Panc1 (cell line): ENCODE measurements at regions of chr9 and their contacts with region 1.

Region 1: DNA sequence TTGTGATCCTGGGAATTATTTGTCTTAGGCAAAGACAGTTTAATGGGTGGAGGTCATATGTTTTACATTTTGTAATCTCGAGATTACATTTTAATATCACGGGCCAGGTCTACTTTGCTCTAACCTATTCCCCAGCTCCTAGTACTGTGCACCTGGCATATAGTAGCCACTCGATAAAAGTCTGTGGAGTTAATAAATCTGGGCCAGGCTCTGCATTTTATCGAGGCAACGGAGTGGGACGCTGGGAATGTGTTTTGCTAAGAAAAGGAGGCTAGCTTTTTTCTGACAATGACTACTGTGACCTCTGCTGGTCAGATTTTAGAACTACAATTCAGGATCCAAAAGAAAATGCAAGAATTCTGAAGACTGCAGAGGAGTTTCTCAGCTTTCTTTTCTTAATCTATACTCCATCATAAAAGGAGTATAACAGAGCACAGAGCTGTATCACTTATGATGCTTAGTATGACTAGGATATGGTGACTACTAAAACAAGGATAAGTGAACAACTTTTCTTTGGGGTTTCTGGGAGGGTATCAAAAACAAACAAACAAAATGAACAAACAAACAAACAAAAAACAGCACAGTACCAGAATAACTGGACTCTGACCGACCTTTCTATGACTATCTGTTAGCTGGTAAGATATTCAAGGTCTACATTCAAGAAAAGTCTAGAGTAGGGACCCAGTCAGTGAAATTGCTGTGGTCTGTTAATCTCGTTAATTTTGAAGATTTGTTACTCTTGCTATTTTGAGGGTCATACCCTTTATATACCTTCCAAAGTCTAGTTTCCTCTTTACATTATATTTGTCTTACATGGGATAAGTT is 46.1 kb upstream of the CER1 start:
- DNase-seq: peak; percentile 33
- ATAC-seq: no peak
- H3K4me3 ChIP-seq: 0 out of 4 replicates have a peak overlapping the region, but pooled peaks of 1 of the 2 experiments have one; percentile 18
- H3K27ac ChIP-seq: no peak overlapping the region
- H3K4me1 ChIP-seq: no peaks in the 10 kb centered on the region
- H3K27me3 ChIP-seq: no peaks in the 10 kb centered on the region
- CTCF ChIP-seq: peak; percentile 44

Region 2: DNA sequence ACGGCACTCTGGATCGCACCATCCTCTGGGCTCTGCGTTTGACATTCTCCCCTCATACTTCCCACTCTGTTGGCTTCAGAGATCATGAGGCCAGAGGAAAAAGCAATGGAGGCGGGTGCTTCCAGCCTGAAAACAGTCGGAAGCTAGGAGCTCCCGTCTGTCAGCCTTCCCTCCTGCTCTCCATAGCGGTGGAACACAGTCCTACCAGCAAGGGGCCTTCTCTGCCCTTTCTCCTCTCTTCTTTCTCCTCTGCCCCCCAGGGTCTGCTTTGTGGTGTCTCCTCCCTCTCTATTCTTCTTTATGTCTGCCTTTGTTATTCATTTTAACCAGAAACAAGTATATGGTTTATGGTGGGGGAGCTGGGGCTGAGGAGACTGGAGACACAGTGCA is 302.2 kb before region 1 on chr9:
- CTCF ChIA-PET with region 1: interaction called, 3 read pairs
- POLR2A ChIA-PET with region 1: no interaction called
- in situ Hi-C with region 1: no loop called
- intact Hi-C with region 1: loop called (anchors 5 kb)
- DNase-seq: no peak
- ATAC-seq: no peak
- H3K4me3 ChIP-seq: no peak overlapping the region
- H3K27ac ChIP-seq: no peak overlapping the region
- H3K4me1 ChIP-seq: no peaks in the 10 kb centered on the region
- H3K27me3 ChIP-seq: no peaks in the 10 kb centered on the region
- CTCF ChIP-seq: no peak

Region 3: GRCh38 chr9:14616188-14616982 is 152.2 kb before region 1 on chr9:
- CTCF ChIA-PET with region 1: no interaction called
- POLR2A ChIA-PET with region 1: no interaction called
- in situ Hi-C with region 1: no loop called
- intact Hi-C with region 1: loop called (anchors 5 kb)
- DNase-seq: peak; percentile 2
- ATAC-seq: no peak
- H3K4me3 ChIP-seq: no peak overlapping the region
- H3K27ac ChIP-seq: no peak overlapping the region
- H3K4me1 ChIP-seq: no peaks in the 10 kb centered on the region
- H3K27me3 ChIP-seq: no peaks in the 10 kb centered on the region
- CTCF ChIP-seq: peak; percentile 48; the same call in 1 of the 2 replicates